ENCODE measurements at regions of chr1 and their contacts with region 1.

Region 1: DNA sequence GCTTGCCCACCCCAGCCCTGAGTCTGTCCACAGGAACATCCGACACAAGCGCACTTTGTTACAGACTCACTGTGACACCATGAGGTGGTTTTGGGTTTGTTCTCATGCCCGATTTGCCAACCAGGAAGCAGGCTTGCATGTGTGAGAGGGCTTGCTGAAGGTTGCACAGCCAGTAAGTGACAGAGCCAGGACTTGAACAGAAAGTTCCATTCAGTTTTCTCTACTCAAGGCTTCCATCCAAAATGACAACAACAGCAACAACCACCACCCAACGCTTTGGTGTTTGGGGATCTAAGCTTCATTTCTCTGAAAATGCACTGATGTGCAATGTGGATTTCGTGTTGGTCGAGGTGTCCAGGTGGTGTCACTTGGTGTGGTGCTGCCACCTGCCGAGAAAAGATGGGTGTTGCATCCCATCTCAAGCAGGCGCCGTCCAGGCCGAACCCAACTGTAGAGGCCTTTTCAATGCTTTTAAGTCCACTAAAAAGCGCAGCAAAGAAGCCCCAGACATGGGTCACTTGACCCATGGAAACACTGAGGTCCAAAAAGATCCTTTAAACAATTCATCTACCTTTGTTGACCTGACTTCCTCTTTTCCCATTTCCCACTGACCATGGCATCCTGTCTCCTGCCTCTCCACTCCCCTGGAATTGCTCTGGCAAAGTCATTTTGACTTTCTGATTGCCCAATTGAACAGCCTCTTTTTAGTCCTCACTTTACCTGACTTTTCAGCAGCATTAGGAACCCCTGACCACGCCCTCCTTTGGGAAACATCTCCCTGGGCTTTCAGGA is 12.2 kb downstream of the CITED4 start:
- DNase-seq: peak; percentile 46
- ATAC-seq: peak; percentile 85
- H3K4me3 ChIP-seq: no peak overlapping the region
- H3K27ac ChIP-seq: no peak overlapping the region
- H3K4me1 ChIP-seq: peaks cover 0 to 25% of the 10 kb centered on the region in 2 experiments; a peak in 2 of 4 replicates
- H3K27me3 ChIP-seq: no peaks in the 10 kb centered on the region
- CTCF ChIP-seq: peak; percentile 85 to 89 (median 86)
- POLR2A ChIP-seq: no peak
- RAD21 ChIP-seq: peak; percentile 85

Region 2: GRCh38 chr1:40592107-40592803 is 257.7 kb before region 1 on chr1:
- CTCF ChIA-PET with region 1: interaction called, 3 read pairs
- POLR2A ChIA-PET with region 1: no interaction called
- RAD21 ChIA-PET with region 1: no interaction called
- intact Hi-C with region 1: loop called (anchors 1 kb)
- DNase-seq: peak; percentile 74
- ATAC-seq: peak; percentile 97
- H3K4me3 ChIP-seq: no peak overlapping the region
- H3K27ac ChIP-seq: no peak overlapping the region
- H3K4me1 ChIP-seq: peaks cover 0 to 8% of the 10 kb centered on the region in 2 experiments; a peak in 2 of 4 replicates
- H3K27me3 ChIP-seq: no peaks in the 10 kb centered on the region
- CTCF ChIP-seq: peak; percentile 74 to 78 (median 75)
- POLR2A ChIP-seq: no peak
- RAD21 ChIP-seq: peak; percentile 80

Region 3: DNA sequence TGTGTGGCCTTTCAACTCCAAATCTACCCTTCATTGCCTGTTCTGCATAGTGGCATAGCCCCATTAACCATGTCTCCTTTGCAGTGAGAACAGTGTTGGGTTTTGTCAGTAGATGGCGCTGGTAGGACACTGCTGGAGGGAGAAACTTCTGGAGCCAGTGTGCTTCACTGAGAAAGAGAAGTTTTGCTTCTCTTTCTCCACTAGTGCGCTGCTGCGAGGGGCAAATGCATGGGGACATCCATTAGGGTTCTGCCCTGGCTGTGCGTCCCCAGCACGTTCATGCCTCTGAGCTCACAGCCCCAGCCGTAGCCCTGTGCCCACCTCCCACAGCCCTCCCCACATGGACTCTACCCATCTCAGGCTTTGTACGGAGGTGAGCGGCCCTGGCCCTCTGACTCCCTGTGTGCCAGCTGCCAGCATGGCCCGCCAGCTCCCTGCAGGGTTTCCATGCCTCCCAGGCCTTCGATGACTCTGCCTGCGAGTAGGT is 237.6 kb before region 1 on chr1:
- CTCF ChIA-PET with region 1: interaction called, 3 read pairs
- POLR2A ChIA-PET with region 1: no interaction called
- RAD21 ChIA-PET with region 1: no interaction called
- intact Hi-C with region 1: loop called (anchors 1 kb)
- DNase-seq: peak; percentile 48
- ATAC-seq: peak; percentile 99
- H3K4me3 ChIP-seq: no peak overlapping the region
- H3K27ac ChIP-seq: no peak overlapping the region
- H3K4me1 ChIP-seq: peaks cover 0 to 4% of the 10 kb centered on the region in 2 experiments; a peak in 1 of 4 replicates
- H3K27me3 ChIP-seq: no peaks in the 10 kb centered on the region
- CTCF ChIP-seq: peak; percentile 90 to 93 (median 92)
- POLR2A ChIP-seq: no peak
- RAD21 ChIP-seq: peak; percentile 94

Region 4: GRCh38 chr1:40774266-40774998 is 75.6 kb before region 1 on chr1:
- CTCF ChIA-PET with region 1: interaction called, 9 read pairs
- POLR2A ChIA-PET with region 1: no interaction called
- RAD21 ChIA-PET with region 1: interaction called in 1 of 2 experiments, 7 read pairs
- intact Hi-C with region 1: loop called (anchors 1 kb)
- DNase-seq: peak; percentile 18
- ATAC-seq: peak; percentile 87
- H3K4me3 ChIP-seq: no peak overlapping the region
- H3K27ac ChIP-seq: no peak overlapping the region
- H3K4me1 ChIP-seq: peaks cover 0 to 5% of the 10 kb centered on the region in 2 experiments; a peak in 1 of 4 replicates
- H3K27me3 ChIP-seq: no peaks in the 10 kb centered on the region
- CTCF ChIP-seq: peak; percentile 65 to 96 (median 96); a peak in 5 of 6 replicates
- POLR2A ChIP-seq: no peak
- RAD21 ChIP-seq: peak; percentile 64

Region 5: GRCh38 chr1:40862008-40862863 is 12.2 kb after region 1 on chr1 and contains the start of gene CITED4:
- CTCF ChIA-PET with region 1: interaction called, 7 read pairs
- POLR2A ChIA-PET with region 1: interaction called, 10 read pairs
- RAD21 ChIA-PET with region 1: interaction called in 1 of 2 experiments, 4 read pairs
- intact Hi-C with region 1: no loop called
- DNase-seq: peak; percentile 91
- ATAC-seq: peak; percentile 96
- H3K4me3 ChIP-seq: peak within 1 kb of the TSS; percentile 33 to 62
- H3K27ac ChIP-seq: peak within 1 kb of the TSS; percentile 43; the same call in 1 of the 2 replicates
- H3K4me1 ChIP-seq: peaks cover 11 to 37% of the 10 kb centered on the region in 2 experiments; a peak in 3 of 4 replicates
- H3K27me3 ChIP-seq: no peaks in the 10 kb centered on the region
- CTCF ChIP-seq: peak; percentile 39 to 78 (median 45)
- POLR2A ChIP-seq: no peak
- RAD21 ChIP-seq: peak; percentile 91
- total RNA-seq, gene CITED4: 7.8 TPM

Region 6: DNA sequence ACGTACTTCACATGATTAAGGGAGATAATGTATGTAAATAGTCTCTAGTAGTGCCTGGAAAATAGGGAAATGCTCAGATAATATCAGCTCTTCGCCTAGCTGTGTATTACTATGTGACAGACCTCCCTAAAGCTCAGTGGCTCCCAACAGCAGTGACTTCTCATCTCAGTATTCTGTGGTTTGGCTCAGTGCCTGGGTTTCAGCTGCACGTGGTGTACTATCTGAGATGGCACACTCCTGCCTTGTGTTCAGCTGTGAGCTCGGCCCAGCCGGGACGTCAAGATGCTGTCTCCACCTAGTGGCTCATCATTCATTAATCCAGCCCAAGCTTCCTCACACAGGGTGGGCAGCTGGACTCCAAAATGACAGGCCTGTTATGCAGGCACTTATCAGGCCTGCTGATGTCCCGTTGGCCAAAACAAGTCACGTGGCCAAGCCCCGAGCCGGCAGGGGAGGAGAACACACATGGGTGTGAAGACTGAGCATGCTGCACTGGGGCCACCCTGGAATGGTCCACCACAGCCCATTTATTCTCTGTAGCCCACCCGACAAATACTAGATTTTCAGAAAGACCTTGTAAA is 153.7 kb after region 1 on chr1:
- CTCF ChIA-PET with region 1: interaction called, 11 read pairs
- POLR2A ChIA-PET with region 1: no interaction called
- RAD21 ChIA-PET with region 1: no interaction called
- intact Hi-C with region 1: loop called (anchors 1 kb)
- DNase-seq: peak; percentile 92
- ATAC-seq: peak; percentile 97
- H3K4me3 ChIP-seq: no peak overlapping the region
- H3K27ac ChIP-seq: peak overlapping the region; percentile 28; the same call in 1 of the 2 replicates
- H3K4me1 ChIP-seq: peaks cover 12 to 23% of the 10 kb centered on the region in 2 experiments
- H3K27me3 ChIP-seq: no peaks in the 10 kb centered on the region
- CTCF ChIP-seq: peak; percentile 47 to 50 (median 49); a peak in 5 of 6 replicates
- POLR2A ChIP-seq: no peak
- RAD21 ChIP-seq: peak; percentile 77